GM23248 (cell line): ENCODE measurements at regions of chr17 and their contacts with region 1.

Region 1: DNA sequence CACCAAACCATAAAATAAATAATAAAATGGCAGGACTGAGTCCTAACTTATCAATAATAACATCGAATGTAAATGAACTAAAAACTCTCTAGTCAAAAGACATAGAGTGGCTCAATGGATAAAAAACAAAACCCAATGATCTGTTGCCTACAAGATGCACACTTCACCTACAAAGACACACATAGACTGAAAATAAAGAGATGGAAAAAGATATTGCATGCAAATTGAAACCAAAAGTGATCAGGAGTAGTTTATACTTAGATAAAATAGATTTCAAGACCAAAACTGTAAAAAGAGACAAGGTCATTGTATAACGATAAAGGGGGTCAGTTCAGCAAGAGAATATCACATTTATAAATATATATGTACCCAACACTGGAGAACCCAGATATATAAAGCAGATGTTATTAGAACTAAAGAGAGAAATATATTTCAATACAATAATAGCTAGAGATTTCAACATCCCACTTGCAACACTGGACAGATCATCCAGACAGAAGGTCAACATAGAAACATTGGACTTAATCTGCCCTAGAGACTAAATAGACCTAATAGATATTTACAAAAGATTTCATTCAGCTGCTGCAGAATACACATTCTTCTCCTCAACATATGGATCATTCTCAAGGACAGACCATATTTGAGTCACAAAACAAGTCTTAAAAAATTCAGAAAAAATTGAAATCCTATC is 29.8 kb downstream of the SLC47A2 start:
- DNase-seq: no peak
- H3K4me3 ChIP-seq: no peak overlapping the region
- H3K27ac ChIP-seq: no peak overlapping the region
- H3K4me1 ChIP-seq: no peaks in the 10 kb centered on the region
- H3K27me3 ChIP-seq: no peaks in the 10 kb centered on the region

Region 2: DNA sequence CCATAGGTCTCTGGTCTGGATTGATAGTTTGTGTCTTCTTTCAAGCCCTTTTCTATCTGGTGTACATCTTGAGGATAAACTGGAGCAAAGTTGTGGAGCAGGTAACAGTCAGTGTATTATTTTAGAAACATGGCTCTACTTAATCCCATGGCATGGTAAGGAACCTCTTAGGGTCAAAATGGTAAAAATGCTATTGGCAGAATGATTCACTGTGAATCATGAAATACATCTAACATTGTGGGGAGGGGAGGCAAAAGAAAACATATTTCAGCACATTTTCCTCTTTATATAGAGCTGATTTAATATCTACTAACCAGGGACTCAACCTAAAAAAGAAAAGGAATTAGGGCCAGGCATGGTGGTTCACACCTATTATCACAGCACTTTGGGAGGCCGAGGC is 55.9 kb before region 1 on chr17:
- in situ Hi-C with region 1: no loop called
- DNase-seq: no peak
- H3K4me3 ChIP-seq: no peak overlapping the region
- H3K27ac ChIP-seq: no peak overlapping the region
- H3K4me1 ChIP-seq: no peaks in the 10 kb centered on the region
- H3K27me3 ChIP-seq: 0 out of 2 replicates have a peak, but pooled peaks cover 9% of the 10 kb centered on the region

Region 3: GRCh38 chr17:19744922-19745757 is 58.6 kb after region 1 on chr17:
- in situ Hi-C with region 1: loop called (anchors 10 kb)
- DNase-seq: peak; percentile 74
- H3K4me3 ChIP-seq: peak overlapping the region; percentile 26; the same call in 1 of the 2 replicates
- H3K27ac ChIP-seq: no peak overlapping the region
- H3K4me1 ChIP-seq: peaks cover 7% of the 10 kb centered on the region
- H3K27me3 ChIP-seq: no peaks in the 10 kb centered on the region